ENCODE measurements at regions of chr6 and their contacts with region 1.

Region 1: GRCh38 chr6:18595774-18596530 is 208.8 kb downstream of the RNF144B start:
- DNase-seq: peak; percentile 40 to 67
- H3K4me3 ChIP-seq: no peak overlapping the region
- H3K4me3 Mint-ChIP-seq: no peak overlapping the region
- H3K27ac Mint-ChIP-seq: no peak overlapping the region
- H3K4me1 ChIP-seq: no peaks in the 10 kb centered on the region
- H3K4me1 Mint-ChIP-seq: no peaks in the 10 kb centered on the region
- H3K27me3 ChIP-seq: no peaks in the 10 kb centered on the region
- H3K27me3 Mint-ChIP-seq: peaks cover 12% of the 10 kb centered on the region
- CTCF ChIP-seq: peak; percentile 80 to 92

Region 2: GRCh38 chr6:18527836-18528743 is 67.9 kb before region 1 on chr6:
- CTCF ChIA-PET with region 1: no interaction called
- POLR2A ChIA-PET with region 1: no interaction called
- intact Hi-C with region 1: loop called (anchors 2 kb)
- DNase-seq: no peak
- H3K4me3 ChIP-seq: no peak overlapping the region
- H3K4me3 Mint-ChIP-seq: no peak overlapping the region
- H3K27ac Mint-ChIP-seq: no peak overlapping the region
- H3K4me1 ChIP-seq: no peaks in the 10 kb centered on the region
- H3K4me1 Mint-ChIP-seq: no peaks in the 10 kb centered on the region
- H3K27me3 ChIP-seq: no peaks in the 10 kb centered on the region
- H3K27me3 Mint-ChIP-seq: peaks cover 14% of the 10 kb centered on the region
- CTCF ChIP-seq: peak in 1 of 2 experiments; percentile 22

Region 3: DNA sequence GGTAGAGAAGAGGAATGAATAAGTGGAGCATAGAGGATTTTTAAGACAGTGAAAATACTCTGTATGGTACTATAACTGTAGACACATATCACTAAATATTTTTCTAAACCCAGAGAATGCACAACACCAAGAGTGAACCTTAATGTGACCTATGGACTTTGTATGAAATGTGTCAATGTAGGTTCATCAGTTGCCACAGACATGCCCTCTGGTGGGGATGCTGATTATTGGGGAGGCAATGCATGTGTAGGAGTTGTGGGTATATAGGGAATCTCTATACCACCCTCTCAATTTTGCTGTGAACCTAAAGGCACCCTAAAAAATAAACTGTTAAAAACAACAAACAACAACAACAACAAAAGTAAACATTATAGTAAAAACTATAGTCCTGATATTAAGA is 84.9 kb after region 1 on chr6:
- CTCF ChIA-PET with region 1: no interaction called
- POLR2A ChIA-PET with region 1: no interaction called
- intact Hi-C with region 1: loop called (anchors 1 kb)
- DNase-seq: peak in 1 of 2 experiments; percentile 8
- H3K4me3 ChIP-seq: no peak overlapping the region
- H3K4me3 Mint-ChIP-seq: no peak overlapping the region
- H3K27ac Mint-ChIP-seq: no peak overlapping the region
- H3K4me1 ChIP-seq: no peaks in the 10 kb centered on the region
- H3K4me1 Mint-ChIP-seq: no peaks in the 10 kb centered on the region
- H3K27me3 ChIP-seq: no peaks in the 10 kb centered on the region
- H3K27me3 Mint-ChIP-seq: no peaks in the 10 kb centered on the region
- CTCF ChIP-seq: peak in 1 of 2 experiments; percentile 17

Region 4: DNA sequence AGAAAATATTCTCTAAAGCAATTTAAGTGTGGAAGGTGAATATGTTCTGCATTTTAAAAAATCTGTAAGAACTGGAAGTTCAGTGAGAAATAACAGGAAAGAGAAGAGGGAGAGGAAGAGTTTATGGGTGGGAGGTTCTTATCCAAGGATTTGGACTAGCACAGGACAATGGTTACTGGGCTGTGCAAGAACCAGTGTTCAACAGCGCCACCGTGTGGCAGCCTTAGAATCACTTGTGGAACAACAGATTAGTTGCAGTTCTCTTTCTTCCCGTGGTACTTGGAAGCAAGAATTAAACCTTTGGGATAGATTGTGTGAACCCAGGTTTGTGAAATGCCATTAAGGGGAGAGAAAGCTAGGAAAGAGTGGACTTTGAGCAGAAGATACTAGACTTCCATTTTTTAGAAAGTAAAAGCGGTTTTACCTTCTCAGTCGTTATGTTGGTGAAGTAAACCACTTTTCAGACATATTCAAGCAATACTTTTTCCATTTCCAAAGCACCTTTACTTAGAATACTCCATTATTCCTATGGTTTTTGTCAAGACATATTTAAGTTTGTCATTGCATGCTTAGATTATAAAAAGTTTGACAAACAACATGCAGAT is 227.9 kb after region 1 on chr6:
- CTCF ChIA-PET with region 1: no interaction called
- POLR2A ChIA-PET with region 1: no interaction called
- intact Hi-C with region 1: loop called (anchors 1 kb)
- DNase-seq: peak; percentile 42 to 63
- H3K4me3 ChIP-seq: no peak overlapping the region
- H3K4me3 Mint-ChIP-seq: no peak overlapping the region
- H3K27ac Mint-ChIP-seq: no peak overlapping the region
- H3K4me1 ChIP-seq: no peaks in the 10 kb centered on the region
- H3K4me1 Mint-ChIP-seq: no peaks in the 10 kb centered on the region
- H3K27me3 ChIP-seq: no peaks in the 10 kb centered on the region
- H3K27me3 Mint-ChIP-seq: no peaks in the 10 kb centered on the region
- CTCF ChIP-seq: peak; percentile 39 to 73

Region 5: DNA sequence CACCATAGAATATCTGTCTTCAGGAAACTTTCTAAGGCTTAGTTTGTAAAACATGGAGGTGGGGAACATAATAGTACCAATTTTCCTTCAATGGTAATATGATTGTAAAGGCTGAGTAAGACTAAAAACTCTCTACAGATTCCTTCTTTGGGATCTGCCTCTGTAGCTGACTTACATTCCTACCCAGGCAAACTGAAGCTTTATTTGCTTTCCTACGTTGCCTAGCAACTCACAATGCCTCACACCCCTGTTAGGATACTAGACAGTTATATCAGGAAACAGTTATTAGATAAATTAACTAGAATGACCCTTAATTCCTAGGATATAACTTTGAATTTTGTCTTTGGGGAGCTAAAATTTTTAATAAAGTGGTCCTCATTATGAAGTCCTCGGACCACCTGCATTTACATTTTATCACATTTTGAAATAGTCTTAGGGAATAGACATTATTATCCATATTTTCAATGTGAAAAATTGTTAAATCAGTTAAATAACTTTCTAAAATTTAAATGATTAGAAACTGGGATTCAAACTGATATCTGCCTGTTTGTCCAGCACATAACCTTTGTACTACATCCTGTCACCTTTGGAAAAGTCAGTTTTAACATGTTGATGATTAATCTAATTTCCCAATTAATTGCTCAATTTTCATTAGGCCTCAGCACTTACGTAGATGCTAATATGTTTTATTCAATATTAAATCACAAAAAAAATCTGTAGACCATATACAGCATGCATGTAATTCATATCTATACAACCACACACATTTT is 382.6 kb after region 1 on chr6:
- CTCF ChIA-PET with region 1: no interaction called
- POLR2A ChIA-PET with region 1: no interaction called
- intact Hi-C with region 1: no loop called
- DNase-seq: peak in 1 of 2 experiments; percentile 14
- H3K4me3 ChIP-seq: no peak overlapping the region
- H3K4me3 Mint-ChIP-seq: no peak overlapping the region
- H3K27ac Mint-ChIP-seq: no peak overlapping the region
- H3K4me1 ChIP-seq: no peaks in the 10 kb centered on the region
- H3K4me1 Mint-ChIP-seq: no peaks in the 10 kb centered on the region
- H3K27me3 ChIP-seq: no peaks in the 10 kb centered on the region
- H3K27me3 Mint-ChIP-seq: peaks cover 7% of the 10 kb centered on the region
- CTCF ChIP-seq: no peak

Region 6: DNA sequence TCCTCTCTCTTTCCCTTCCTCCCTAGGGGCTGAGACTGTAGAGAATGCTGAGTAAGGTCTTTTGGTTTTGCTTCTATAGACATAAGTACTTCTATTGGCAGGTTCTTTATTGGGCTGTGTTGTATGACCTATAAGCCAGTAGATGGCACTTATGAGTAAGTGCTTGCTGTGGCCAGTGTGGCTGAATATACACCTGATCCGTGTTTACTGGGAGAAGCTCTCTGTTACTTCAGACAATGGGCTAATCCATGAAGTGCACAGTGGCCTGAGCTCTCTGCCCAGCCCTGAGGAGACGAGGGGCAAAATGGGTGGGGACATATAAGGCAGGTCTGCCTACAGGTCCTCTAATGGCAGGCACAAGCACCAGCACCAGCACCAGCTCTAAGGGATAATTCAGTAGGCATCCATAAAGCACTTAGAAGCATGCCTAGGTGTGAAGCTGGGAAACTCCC is 401.4 kb after region 1 on chr6:
- CTCF ChIA-PET with region 1: no interaction called
- POLR2A ChIA-PET with region 1: no interaction called
- intact Hi-C with region 1: loop called (anchors 1 kb)
- DNase-seq: peak; percentile 30 to 38
- H3K4me3 ChIP-seq: no peak overlapping the region
- H3K4me3 Mint-ChIP-seq: no peak overlapping the region
- H3K27ac Mint-ChIP-seq: no peak overlapping the region
- H3K4me1 ChIP-seq: no peaks in the 10 kb centered on the region
- H3K4me1 Mint-ChIP-seq: no peaks in the 10 kb centered on the region
- H3K27me3 ChIP-seq: no peaks in the 10 kb centered on the region
- H3K27me3 Mint-ChIP-seq: peaks cover 13% of the 10 kb centered on the region
- CTCF ChIP-seq: peak; percentile 36 to 76